Endothelial cell of umbilical vein (primary cell): ENCODE measurements at regions of chr19 and their contacts with region 1.

Region 1: DNA sequence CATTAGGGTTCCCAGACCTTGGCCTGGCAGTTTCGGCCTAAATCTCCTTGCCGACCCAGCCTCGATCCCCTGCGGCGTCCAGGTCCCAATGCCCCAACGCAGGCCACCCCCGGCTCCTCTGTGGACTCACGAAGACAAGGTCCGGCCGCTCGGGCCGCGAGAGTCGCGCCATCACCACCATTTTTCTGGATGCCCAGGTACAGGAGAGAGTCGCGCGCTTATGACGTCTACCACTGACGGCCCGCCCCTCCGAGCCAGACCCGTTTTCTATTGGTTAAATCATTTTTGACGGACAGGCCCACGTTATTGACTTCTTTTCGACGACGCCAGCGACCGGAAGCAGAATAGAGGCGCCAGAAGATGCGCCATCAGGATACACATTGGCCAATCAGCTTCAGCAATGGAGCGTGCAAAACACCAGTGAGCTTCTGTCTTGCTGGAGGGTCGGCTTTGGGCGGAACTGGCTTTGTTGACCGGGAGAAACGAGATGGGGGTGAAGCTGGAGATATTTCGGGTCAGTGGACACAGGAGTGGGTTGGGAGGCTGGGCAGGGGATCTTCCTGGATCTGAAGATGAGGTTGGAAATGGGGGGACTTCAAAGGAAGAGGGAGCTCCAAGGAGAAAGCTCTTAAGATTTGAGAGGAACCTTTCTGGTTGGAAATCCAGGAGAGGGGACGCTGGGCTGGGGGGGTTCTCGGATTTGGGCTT is at the starts of genes PET100 and XAB2:
- DNase-seq: peak; percentile 99
- H3K4me3 ChIP-seq: peak within 1 kb of the TSS; percentile 91 to 96 (median 92)
- H3K27ac ChIP-seq: peak within 1 kb of the TSS; percentile 94
- H3K4me1 ChIP-seq: peaks cover 16% of the 10 kb centered on the region
- H3K27me3 ChIP-seq: no peaks in the 10 kb centered on the region
- CTCF ChIP-seq: no peak
- POLR2A ChIP-seq: no peak
- total RNA-seq, gene PET100: 162 and 172 TPM in 2 replicates
- total RNA-seq, gene XAB2: 37.0 and 37.3 TPM in 2 replicates

Region 2: GRCh38 chr19:7919610-7920518 is 290.4 kb after region 1 on chr19 and contains the start of gene SNAPC2:
- CTCF ChIA-PET with region 1: no interaction called
- POLR2A ChIA-PET with region 1: no interaction called
- dilution Hi-C with region 1: no loop called
- intact Hi-C with region 1: loop called (anchors 1 kb)
- DNase-seq: peak; percentile 94
- H3K4me3 ChIP-seq: peak within 1 kb of the TSS; percentile 61 to 79 (median 63)
- H3K27ac ChIP-seq: peak within 1 kb of the TSS; percentile 13
- H3K4me1 ChIP-seq: peaks cover 22% of the 10 kb centered on the region
- H3K27me3 ChIP-seq: peaks cover 18 to 31% of the 10 kb centered on the region in 2 experiments
- CTCF ChIP-seq: no peak
- POLR2A ChIP-seq: peak; percentile 68
- total RNA-seq, gene SNAPC2: 23.7 and 29.2 TPM in 2 replicates